Brain microvascular endothelial cell (primary cell): ENCODE measurements at regions of chr14 and their contacts with region 1.

Region 1: DNA sequence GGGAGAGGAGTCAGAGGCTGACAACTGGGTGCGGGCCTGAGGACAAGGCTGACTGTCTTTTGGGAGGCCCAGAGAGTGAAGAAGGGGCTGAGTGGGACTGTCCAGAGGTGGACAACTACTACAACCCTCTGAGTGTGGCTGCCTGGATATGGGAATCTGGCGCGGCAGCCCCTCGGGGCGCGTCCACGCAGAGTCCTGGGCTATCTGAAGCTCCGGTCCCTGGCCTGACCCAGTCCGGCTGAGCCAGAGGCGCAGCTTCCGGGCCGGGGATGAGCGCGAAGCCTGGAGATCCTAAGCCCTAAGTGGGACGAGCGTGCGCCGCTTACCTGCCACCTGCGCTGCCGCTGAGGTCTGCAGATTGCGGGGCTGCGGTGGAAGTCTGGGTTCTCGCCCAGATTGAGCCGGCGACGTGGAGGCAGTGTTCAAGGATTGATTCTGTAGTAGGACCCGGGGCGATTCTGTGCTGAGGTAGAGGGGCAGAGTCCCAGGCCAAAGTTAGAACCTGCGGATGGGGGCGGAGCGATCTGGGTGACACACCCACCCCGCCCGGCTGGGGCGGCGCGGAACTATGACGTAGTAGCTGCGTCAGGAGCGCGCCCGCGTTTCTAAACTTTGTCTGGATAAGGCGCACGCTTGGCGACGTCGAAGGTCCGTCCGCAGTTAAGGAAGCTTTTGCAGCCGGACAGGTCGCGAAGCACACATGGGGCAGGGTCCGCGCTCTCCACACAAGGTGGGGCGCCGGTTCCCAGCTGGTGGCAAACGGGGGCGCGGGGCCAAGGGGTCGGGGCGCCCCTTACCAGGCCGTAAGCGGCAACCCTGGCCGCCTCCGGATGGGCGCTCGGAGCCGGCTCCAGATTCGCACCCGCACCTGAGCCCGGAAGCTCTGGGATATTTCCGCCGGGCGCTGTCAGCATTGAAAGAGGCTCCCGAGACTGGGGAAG is at the starts of genes DHRS1 and NOP9:
- DNase-seq: peak; percentile 83
- H3K4me3 ChIP-seq: peak within 1 kb of the TSS; percentile 98
- H3K27ac ChIP-seq: peak within 1 kb of the TSS; percentile 60
- H3K27me3 ChIP-seq: no peaks in the 10 kb centered on the region
- CTCF ChIP-seq: no peak

Region 2: GRCh38 chr14:23926543-23926942 is 373.0 kb before region 1 on chr14:
- in situ Hi-C with region 1: no loop called
- DNase-seq: no peak
- H3K4me3 ChIP-seq: no peak overlapping the region
- H3K27ac ChIP-seq: no peak overlapping the region
- H3K27me3 ChIP-seq: no peaks in the 10 kb centered on the region
- CTCF ChIP-seq: no peak

Region 3: DNA sequence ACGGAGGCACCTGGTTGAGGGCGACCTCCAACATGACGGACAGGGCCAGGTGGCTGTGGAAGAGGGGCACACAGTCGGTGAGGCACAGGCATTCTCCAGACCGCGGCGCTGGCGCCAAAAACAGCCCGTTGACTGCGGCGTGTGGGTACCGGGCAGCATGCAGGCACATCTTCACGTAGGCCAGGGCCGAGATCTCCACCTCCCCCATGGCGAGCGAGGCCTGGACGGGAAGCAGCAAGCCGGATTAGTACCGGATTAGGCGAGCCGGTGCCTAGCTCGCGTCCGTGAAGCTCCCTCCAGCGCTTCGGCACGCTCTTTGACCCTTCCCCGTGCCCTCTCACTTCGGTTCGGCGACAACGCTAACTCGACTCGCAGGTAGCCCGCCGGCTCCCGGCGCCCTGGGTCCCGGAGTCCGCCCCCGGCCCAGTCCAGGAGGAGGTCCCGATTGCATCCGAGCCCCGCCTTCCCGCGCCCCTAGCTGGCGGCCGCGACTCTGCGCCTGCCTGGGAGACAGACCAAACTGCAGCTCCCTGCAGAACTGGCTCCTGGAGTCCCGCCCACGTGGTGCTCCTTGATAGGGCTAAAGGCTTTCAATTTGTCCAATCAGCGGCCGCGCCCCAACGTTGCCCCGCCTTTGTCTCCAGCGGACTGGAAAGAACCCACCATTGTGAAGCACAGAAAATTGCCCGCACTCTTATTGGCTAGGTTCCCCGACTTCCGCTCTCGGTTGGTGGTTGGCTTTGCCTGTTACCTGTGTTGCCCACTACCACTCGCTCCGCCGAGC is 158.2 kb before region 1 on chr14 and contains the start of gene EMC9:
- in situ Hi-C with region 1: no loop called
- DNase-seq: peak; percentile 100
- H3K4me3 ChIP-seq: peak within 1 kb of the TSS; percentile 93
- H3K27ac ChIP-seq: peak within 1 kb of the TSS; percentile 66
- H3K27me3 ChIP-seq: no peaks in the 10 kb centered on the region
- CTCF ChIP-seq: peak; percentile 65

Region 4: DNA sequence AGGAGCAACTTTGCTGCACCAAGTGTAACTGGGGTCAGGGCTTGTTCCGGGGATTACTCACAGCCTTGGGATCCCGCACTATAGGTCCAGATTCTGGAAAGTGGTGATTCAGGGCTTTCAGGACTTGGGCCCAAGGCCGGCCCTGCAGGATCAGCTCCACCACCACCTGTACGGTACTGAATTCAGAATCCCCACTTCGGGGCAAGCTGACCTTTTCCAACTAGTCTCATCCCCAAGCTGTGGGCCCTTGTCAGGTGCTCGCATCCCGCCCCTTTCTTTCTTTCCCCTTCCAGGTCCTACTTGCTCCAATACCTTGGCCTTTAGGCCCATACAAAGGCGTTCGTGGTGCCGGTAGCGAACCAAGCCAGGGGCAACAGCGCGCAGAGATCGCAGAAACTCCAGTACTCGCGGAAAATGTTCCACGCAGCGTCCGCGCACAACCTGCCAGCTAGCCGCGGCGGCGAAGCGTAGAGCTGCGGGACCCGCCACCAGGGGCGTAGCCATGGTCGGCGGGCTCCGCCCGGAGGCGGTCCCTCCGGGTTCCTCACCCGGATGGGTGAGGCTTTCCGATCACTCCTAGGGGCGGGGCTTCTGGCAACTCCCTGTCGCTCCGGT is 57.6 kb before region 1 on chr14:
- in situ Hi-C with region 1: loop called (anchors 10 kb)
- DNase-seq: peak; percentile 86
- H3K4me3 ChIP-seq: peak overlapping the region; percentile 90
- H3K27ac ChIP-seq: peak overlapping the region; percentile 98
- H3K27me3 ChIP-seq: no peaks in the 10 kb centered on the region
- CTCF ChIP-seq: peak; percentile 60

Region 5: DNA sequence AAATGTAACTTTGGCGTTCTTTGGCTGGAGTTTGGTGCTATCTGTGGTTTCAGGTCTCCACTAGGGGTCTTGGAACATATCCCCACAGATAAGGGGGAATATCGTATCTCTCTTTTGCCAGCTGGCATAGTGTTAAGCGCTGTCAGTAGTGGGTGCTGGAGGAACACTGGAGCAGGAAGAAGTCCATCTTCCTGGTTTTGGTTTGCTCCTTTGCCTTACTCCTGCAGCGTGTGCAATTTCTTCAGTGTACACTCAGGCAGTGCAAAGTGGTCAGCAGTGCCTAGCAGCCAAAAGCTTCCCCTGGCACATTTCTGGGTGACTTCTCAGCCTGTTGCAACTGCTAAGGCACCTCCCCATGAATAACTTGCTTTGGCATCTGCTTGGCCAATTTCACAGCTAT is 52.0 kb after region 1 on chr14:
- in situ Hi-C with region 1: no loop called
- DNase-seq: no peak
- H3K4me3 ChIP-seq: no peak overlapping the region
- H3K27ac ChIP-seq: no peak overlapping the region
- H3K27me3 ChIP-seq: peaks cover 14% of the 10 kb centered on the region
- CTCF ChIP-seq: peak; percentile 33

Region 6: GRCh38 chr14:24734878-24735500 is 435.5 kb after region 1 on chr14:
- in situ Hi-C with region 1: no loop called
- DNase-seq: peak; percentile 11
- H3K4me3 ChIP-seq: no peak overlapping the region
- H3K27ac ChIP-seq: no peak overlapping the region
- H3K27me3 ChIP-seq: no peaks in the 10 kb centered on the region
- CTCF ChIP-seq: peak; percentile 65